B cell (primary cell): ENCODE measurements at regions of chr9 and their contacts with region 1.

Region 1: DNA sequence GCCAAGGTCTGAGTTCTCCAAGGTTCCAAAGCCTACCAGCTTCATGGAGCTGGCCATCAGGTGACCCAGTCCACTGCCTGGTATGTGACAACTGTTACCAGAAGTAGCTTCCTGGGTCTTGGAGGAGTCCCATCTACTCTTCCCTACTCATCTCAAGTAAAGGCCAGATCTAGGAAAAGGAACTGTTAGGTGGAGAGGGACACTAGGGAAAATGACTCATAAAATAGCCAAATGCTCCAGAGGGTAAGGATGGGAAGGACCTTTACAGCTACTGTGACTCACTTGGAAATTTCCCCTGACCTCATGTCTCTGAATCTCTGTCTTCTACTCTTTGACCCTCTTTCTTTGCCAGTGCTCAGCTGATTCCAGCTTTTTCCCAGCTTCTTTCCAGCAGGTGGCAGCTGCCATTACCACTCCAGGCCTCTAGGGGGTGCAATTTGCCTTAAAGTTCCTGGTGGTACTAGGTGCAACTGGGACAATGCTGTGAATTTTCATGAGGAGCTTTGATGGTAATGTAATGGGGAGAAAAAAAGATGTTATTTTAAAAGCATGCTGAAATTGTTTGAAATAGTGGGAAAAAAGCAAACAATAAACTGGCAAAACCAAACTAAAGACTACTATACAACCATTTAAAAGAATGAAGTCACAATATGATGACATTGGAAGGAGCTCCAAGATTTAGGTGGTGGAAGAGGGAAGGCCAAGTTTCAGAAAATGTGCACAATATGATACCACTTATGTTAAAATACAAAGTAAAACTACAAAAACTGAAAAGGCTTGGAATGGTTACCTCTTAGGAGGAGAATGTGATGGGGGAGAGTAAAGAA is 27.1 kb upstream of the MYORG start:
- DNase-seq: peak; percentile 63
- ATAC-seq: peak; percentile 67
- H3K4me3 ChIP-seq: no peak overlapping the region
- H3K4me3 Mint-ChIP-seq: no peak overlapping the region
- H3K27ac ChIP-seq: no peak overlapping the region
- H3K27ac Mint-ChIP-seq: no peak overlapping the region
- H3K4me1 ChIP-seq: no peaks in the 10 kb centered on the region
- H3K4me1 Mint-ChIP-seq: no peaks in the 10 kb centered on the region
- H3K27me3 ChIP-seq: no peaks in the 10 kb centered on the region
- H3K27me3 Mint-ChIP-seq: no peaks in the 10 kb centered on the region
- CTCF ChIP-seq: peak; percentile 100

Region 2: GRCh38 chr9:34417734-34418133 is 14.0 kb after region 1 on chr9:
- CTCF ChIA-PET with region 1: interaction called, 13 read pairs
- POLR2A ChIA-PET with region 1: no interaction called
- intact Hi-C with region 1: no loop called
- DNase-seq: no peak
- ATAC-seq: no peak
- H3K4me3 ChIP-seq: no peak overlapping the region
- H3K4me3 Mint-ChIP-seq: no peak overlapping the region
- H3K27ac ChIP-seq: no peak overlapping the region
- H3K27ac Mint-ChIP-seq: no peak overlapping the region
- H3K4me1 ChIP-seq: no peaks in the 10 kb centered on the region
- H3K4me1 Mint-ChIP-seq: no peaks in the 10 kb centered on the region
- H3K27me3 ChIP-seq: no peaks in the 10 kb centered on the region
- H3K27me3 Mint-ChIP-seq: no peaks in the 10 kb centered on the region
- CTCF ChIP-seq: no peak

Region 3: DNA sequence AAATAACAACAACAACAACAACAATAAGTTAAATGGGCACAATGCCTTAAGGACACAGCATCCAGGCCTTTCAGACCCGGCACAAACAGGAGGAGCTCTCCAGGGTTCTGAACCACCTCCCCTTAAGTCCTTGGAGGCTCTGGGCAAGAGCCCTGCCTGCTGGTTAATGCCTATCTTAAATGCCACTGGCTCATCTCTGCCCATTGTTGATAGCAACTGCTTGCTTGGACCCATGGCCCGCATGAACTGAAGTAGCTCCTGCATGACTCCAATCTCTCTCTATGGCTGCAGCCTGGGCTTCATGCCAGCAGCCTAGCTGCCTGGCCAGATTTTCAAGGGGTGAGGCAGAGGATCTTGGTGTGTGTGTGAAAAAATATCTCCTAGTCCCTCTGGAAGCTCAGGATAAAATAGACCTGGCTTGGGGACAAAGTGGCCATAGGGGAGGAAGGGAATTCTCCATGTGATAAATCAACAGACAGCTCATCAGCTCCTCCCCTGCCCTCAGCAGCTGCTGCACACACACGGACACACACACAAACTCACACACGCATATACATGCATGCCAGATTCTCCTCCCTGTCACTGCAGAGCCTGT is 27.2 kb after region 1 on chr9:
- CTCF ChIA-PET with region 1: interaction called, 16 read pairs
- POLR2A ChIA-PET with region 1: no interaction called
- intact Hi-C with region 1: no loop called
- DNase-seq: no peak
- ATAC-seq: no peak
- H3K4me3 ChIP-seq: no peak overlapping the region
- H3K4me3 Mint-ChIP-seq: no peak overlapping the region
- H3K27ac ChIP-seq: no peak overlapping the region
- H3K27ac Mint-ChIP-seq: no peak overlapping the region
- H3K4me1 ChIP-seq: no peaks in the 10 kb centered on the region
- H3K4me1 Mint-ChIP-seq: no peaks in the 10 kb centered on the region
- H3K27me3 ChIP-seq: no peaks in the 10 kb centered on the region
- H3K27me3 Mint-ChIP-seq: no peaks in the 10 kb centered on the region
- CTCF ChIP-seq: no peak

Region 4: GRCh38 chr9:34500623-34501267 is 97.0 kb after region 1 on chr9:
- CTCF ChIA-PET with region 1: interaction called, 31 read pairs
- POLR2A ChIA-PET with region 1: no interaction called
- intact Hi-C with region 1: loop called (anchors 1 kb)
- DNase-seq: peak; percentile 78
- ATAC-seq: peak; percentile 86
- H3K4me3 ChIP-seq: no peak overlapping the region
- H3K4me3 Mint-ChIP-seq: no peak overlapping the region
- H3K27ac ChIP-seq: no peak overlapping the region
- H3K27ac Mint-ChIP-seq: no peak overlapping the region
- H3K4me1 ChIP-seq: peaks cover 0 to 3% of the 10 kb centered on the region in 2 donors
- H3K4me1 Mint-ChIP-seq: no peaks in the 10 kb centered on the region
- H3K27me3 ChIP-seq: peaks cover 0 to 10% (median 3%) of the 10 kb centered on the region in 4 experiments
- H3K27me3 Mint-ChIP-seq: peaks cover 38% of the 10 kb centered on the region
- CTCF ChIP-seq: peak; percentile 98

Region 5: DNA sequence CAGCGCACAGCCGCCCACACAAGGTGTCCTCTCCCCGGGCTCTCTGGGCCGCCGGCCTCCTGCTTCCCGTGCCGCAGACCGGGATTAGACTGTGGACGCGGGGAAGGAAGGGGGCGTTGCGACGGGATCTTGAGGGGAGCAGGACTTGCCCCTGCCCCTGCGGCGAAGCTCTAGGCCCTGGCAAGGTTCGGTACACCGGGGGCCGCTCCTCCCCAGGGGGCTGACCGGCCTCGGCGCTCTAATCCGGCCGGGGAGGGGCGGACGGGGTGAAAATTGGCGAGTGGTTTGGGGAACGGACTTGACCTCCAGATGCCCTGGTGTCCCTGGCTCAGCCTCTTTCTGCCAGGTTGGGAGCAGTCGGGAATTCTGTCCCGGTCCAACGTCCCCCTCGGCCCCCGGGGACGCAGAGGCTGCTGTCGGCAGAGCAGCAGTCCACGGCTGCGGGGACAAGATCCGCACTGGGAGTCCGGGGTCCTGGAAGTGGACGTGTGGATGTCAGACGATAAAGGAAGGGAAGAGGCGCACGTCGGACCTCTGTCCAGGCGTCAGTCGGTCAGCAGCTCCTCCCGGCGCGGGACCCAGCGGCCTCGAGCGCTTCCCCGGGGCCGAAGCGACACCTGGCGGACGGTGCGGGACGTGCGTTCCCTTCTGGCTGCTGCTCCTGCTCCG is 187.6 kb after region 1 on chr9:
- CTCF ChIA-PET with region 1: interaction called, 30 read pairs
- POLR2A ChIA-PET with region 1: no interaction called
- intact Hi-C with region 1: loop called (anchors 1 kb)
- DNase-seq: peak; percentile 85
- ATAC-seq: peak; percentile 92
- H3K4me3 ChIP-seq: peak overlapping the region; percentile 38 to 73 (median 48)
- H3K4me3 Mint-ChIP-seq: peak overlapping the region; percentile 81
- H3K27ac ChIP-seq: no peak overlapping the region
- H3K27ac Mint-ChIP-seq: no peak overlapping the region
- H3K4me1 ChIP-seq: peaks cover 40 to 49% of the 10 kb centered on the region in 2 donors
- H3K4me1 Mint-ChIP-seq: peaks cover 37% of the 10 kb centered on the region
- H3K27me3 ChIP-seq: peaks cover 0 to 81% (median 60%) of the 10 kb centered on the region in 4 experiments
- H3K27me3 Mint-ChIP-seq: peaks cover 75% of the 10 kb centered on the region
- CTCF ChIP-seq: peak; percentile 95

Region 6: DNA sequence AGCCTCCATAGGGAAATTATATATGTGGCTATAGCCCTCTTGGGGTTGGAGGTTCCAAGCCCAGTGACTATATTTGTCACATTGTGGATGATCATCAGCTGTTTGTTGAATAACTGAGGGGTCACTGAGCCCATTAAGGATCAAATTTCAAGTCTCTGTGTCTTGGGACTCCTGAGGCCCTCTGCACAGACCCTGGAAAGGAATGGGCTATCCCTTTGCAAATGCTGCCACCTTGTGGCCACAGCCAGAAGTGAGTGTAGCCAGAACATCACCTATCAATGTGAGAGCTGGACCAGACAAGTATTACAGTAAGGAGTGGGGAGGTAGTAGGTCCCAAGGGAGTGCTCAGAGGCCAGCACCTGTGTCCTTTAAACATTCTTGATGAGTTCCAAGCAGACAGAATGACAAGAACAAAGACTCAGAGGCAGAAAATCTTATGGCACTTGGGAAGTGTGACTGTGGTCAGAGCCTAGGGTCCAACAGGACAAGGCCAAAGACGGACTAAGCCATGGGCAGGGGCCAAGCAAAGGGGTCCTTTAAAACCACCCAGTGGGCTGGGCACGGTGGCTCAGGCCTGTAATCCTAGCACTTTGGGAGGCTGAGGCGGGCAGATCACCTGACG is 200.0 kb after region 1 on chr9:
- CTCF ChIA-PET with region 1: interaction called, 11 read pairs
- POLR2A ChIA-PET with region 1: no interaction called
- intact Hi-C with region 1: no loop called
- DNase-seq: peak; percentile 82
- ATAC-seq: peak; percentile 94
- H3K4me3 ChIP-seq: no peak overlapping the region
- H3K4me3 Mint-ChIP-seq: no peak overlapping the region
- H3K27ac ChIP-seq: no peak overlapping the region
- H3K27ac Mint-ChIP-seq: no peak overlapping the region
- H3K4me1 ChIP-seq: no peaks in the 10 kb centered on the region
- H3K4me1 Mint-ChIP-seq: no peaks in the 10 kb centered on the region
- H3K27me3 ChIP-seq: peaks cover 0 to 10% (median 0%) of the 10 kb centered on the region in 4 experiments
- H3K27me3 Mint-ChIP-seq: peaks cover 13% of the 10 kb centered on the region
- CTCF ChIP-seq: peak; percentile 91